ENCODE measurements at regions of chr12 and their contacts with region 1.

Region 1: DNA sequence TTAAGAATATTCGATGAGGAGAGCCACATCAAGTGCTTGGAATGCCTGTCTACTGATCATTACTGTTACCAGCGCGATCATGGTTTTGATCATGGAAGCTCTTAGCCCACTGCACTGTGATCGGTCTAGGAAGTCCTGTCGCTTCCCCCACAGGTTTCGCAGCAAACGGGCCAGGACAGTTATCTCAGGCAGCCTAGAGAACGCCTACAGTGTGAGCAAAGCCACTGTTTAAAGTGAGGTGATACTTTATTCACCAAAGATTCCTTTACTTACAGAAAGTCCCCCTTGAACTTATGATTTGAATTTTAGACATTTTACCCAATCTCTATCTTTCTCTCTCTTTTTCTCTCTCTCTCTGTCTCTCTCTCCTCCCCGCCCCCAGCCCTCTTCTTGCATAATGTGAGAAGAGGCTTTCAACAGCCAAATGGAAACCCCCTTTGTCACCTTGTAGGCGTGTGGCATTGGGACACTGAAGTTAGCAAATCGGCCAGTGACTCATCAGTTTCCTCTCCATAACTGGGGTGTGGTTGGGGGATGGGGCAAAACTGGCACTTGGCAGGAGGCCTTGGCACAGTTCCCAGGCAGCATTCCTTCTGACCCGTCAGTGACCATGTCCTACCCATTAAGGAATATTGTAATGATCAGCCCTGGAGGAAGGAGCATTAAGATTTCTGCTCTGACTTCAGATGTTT is 214.8 kb downstream of the CHST11 start:
- DNase-seq: peak; percentile 73 to 84
- ATAC-seq: peak; percentile 30 to 74 (median 56)
- H3K4me3 ChIP-seq: no peak overlapping the region
- H3K27ac ChIP-seq: peak overlapping the region; percentile 11 to 88 (median 63)
- H3K4me1 ChIP-seq: peaks cover 30 to 78% (median 65%) of the 10 kb centered on the region in 9 donors
- H3K27me3 ChIP-seq: no peaks in the 10 kb centered on the region
- CTCF ChIP-seq: no peak

Region 2: GRCh38 chr12:104494137-104494792 is 177.3 kb before region 1 on chr12:
- intact Hi-C with region 1: no loop called
- DNase-seq: peak in 1 of 2 donors; percentile 57
- ATAC-seq: peak in 7 of 8 donors; percentile 53 to 76 (median 66)
- H3K4me3 ChIP-seq: peak overlapping the region in 1 of 10 donors; percentile 8
- H3K27ac ChIP-seq: peak overlapping the region in 5 of 10 donors; percentile 26 to 81 (median 35)
- H3K4me1 ChIP-seq: peaks cover 0 to 90% (median 19%) of the 10 kb centered on the region in 9 donors
- H3K27me3 ChIP-seq: no peaks in the 10 kb centered on the region
- CTCF ChIP-seq: no peak

Region 3: DNA sequence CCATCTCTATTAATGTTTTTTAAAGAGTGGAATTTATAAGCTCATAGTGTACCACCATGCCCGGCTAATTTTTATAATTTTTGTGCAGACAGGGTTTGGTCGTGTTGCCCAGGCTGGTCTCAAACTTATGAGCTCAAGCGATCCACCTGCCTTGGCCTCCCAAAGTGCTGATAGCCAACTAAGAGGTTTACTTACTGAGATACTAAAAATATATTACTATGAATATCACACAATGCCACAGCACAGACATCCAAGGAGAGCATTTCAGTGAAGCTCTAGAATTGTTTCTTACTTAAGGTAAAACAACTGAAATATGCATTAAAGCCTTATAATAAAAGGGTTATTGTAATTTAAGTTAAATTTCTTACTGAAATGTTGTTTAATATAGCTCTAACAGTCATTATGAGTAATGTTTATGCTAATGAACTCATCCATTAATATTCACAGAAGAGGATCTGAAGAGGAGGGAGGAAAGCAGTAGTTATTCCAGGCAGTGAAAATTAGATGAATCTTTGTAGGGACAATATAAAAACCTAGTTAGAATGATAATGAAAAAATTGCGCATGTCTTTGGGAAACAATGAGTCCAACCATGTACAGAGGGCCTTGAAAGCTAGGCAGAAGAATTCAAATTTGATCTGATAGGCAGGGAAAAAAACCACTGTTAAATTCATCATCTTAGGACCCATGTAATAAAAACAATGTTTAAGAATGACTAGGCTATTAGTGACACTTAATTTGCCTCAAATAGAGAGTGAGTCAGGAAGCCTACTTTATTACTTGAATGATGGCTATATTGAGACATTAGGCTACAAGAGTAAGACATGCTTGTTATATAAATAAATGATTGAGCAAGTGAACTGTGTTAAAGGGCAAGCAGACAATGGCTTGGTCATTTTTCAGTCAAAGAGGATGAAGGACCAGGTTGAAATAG is 187.3 kb after region 1 on chr12:
- intact Hi-C with region 1: loop called in 1 of 10 experiments (anchors 10 kb)
- DNase-seq: no peak
- ATAC-seq: peak in 5 of 8 donors; percentile 43 to 86 (median 62)
- H3K4me3 ChIP-seq: no peak overlapping the region
- H3K27ac ChIP-seq: peak overlapping the region in 8 of 10 donors; percentile 23 to 62 (median 55)
- H3K4me1 ChIP-seq: peaks cover 0 to 23% (median 9%) of the 10 kb centered on the region in 9 donors
- H3K27me3 ChIP-seq: no peaks in the 10 kb centered on the region
- CTCF ChIP-seq: no peak